OCI-LY7 (cell line): ENCODE measurements at regions of chr4 and their contacts with region 1.

Region 1: GRCh38 chr4:108043526-108043925 is 53.8 kb downstream of the HADH start:
- DNase-seq: peak; percentile 62
- H3K4me3 ChIP-seq: peak overlapping the region; percentile 11
- H3K27ac ChIP-seq: peak overlapping the region; percentile 87
- H3K4me1 ChIP-seq: peaks cover 62% of the 10 kb centered on the region
- CTCF ChIP-seq: no peak

Region 2: GRCh38 chr4:107492566-107492965 is 551.0 kb before region 1 on chr4:
- CTCF ChIA-PET with region 1: no interaction called
- POLR2A ChIA-PET with region 1: no interaction called
- intact Hi-C with region 1: no loop called
- DNase-seq: no peak
- H3K4me3 ChIP-seq: no peak overlapping the region
- H3K27ac ChIP-seq: no peak overlapping the region
- H3K4me1 ChIP-seq: no peaks in the 10 kb centered on the region
- CTCF ChIP-seq: no peak

Region 3: DNA sequence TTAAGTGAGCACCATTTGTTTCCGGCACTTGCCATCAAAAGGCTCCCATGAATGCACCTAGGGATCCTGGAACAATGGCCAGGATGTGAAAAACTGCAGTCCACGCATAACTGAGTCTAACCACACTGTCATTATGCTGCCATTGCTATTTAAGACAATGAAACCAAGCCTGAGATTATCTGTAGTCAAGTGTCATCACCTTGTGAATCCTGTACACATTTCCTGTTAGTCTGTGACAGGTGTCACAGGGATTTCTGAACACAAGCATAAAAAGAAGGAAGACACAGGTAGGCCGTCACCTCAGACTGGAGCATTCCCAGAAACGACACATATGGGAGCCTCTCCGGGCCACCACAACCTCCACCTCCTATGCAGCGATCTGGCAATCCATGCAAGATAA is 12.9 kb after region 1 on chr4:
- CTCF ChIA-PET with region 1: no interaction called
- POLR2A ChIA-PET with region 1: interaction called, 10 read pairs
- intact Hi-C with region 1: no loop called
- DNase-seq: no peak
- H3K4me3 ChIP-seq: no peak overlapping the region
- H3K27ac ChIP-seq: no peak overlapping the region
- H3K4me1 ChIP-seq: peaks cover 21% of the 10 kb centered on the region
- CTCF ChIP-seq: no peak

Region 4: GRCh38 chr4:108628411-108628810 is 584.9 kb after region 1 on chr4:
- CTCF ChIA-PET with region 1: no interaction called
- POLR2A ChIA-PET with region 1: no interaction called
- intact Hi-C with region 1: no loop called
- DNase-seq: no peak
- H3K4me3 ChIP-seq: no peak overlapping the region
- H3K27ac ChIP-seq: no peak overlapping the region
- H3K4me1 ChIP-seq: peaks cover 9% of the 10 kb centered on the region
- CTCF ChIP-seq: no peak